ENCODE measurements at regions of chr20 and their contacts with region 1.

Region 1: DNA sequence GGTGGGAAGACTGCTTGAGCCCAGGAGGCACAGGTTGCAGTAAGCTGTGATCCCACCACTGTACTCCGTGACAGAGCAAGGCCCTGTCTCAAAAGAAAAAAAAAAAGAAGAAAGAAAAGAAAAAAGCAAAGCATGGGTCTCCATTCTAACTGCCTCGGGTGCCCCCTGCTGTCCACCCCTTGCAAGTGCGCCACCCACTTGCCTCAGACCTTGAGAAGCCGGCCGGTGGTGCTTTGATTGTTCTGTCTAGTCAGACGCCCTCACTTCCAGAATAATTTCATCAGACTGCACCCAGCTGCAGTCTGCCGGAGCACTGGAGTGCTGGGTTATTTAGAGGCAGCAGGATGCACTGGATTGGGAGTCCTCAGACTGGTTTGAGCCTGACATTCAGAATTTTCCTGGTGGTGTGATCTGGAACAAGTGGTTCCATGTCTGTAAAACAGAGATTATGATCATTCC is 17.6 kb upstream of the TM9SF4 start:
- DNase-seq: peak; percentile 18
- H3K4me3 ChIP-seq: no peak overlapping the region
- H3K27ac ChIP-seq: no peak overlapping the region
- H3K4me1 ChIP-seq: peaks cover 0 to 3% (median 0%) of the 10 kb centered on the region in 3 donors
- H3K27me3 ChIP-seq: peaks cover 0 to 6% (median 0%) of the 10 kb centered on the region in 4 donors
- CTCF ChIP-seq: peak; percentile 66 to 95 (median 82)
- POLR2A ChIP-seq: no peak

Region 2: DNA sequence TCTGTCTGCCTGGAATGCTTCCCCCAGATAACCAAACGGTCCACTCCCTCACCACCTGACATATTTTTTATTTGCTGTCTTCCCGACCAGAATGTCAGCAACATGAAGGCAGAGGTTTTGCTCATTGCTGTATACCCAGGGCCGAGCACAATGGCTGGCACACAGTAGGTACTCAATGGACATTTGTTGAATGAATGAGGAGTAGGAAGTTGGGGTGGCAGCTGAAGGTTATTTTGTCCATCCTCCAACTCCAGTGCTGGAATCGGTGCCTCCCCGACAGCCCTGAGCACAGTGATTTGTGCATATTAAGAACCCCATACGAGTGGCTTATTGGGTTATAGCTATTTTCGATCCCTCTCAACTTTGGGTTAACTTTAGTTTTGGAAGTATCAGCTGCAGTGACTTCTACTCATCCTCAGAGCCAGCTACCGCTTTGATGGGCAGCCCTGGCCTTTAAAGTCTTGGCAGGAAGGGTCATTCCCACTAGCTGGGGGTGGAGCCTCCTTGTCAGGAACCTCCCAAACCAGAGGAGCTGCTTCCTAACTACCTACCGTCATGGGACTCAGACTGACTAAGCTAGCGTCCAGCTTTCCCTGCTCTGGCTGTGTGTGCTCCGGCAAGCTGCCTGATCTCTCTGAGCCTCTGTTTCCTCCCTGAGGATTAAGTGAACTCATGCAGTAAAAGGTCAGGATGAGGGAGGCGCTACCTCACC is 231.8 kb before region 1 on chr20:
- intact Hi-C with region 1: loop called (anchors 10 kb)
- DNase-seq: no peak
- H3K4me3 ChIP-seq: peak overlapping the region; percentile 47 to 75 (median 58)
- H3K27ac ChIP-seq: peak overlapping the region in 2 of 4 donors; percentile 10 to 60
- H3K4me1 ChIP-seq: peaks cover 13 to 22% (median 16%) of the 10 kb centered on the region in 3 donors
- H3K27me3 ChIP-seq: peaks cover 0 to 66% (median 0%) of the 10 kb centered on the region in 4 donors
- CTCF ChIP-seq: no peak
- POLR2A ChIP-seq: no peak

Region 3: GRCh38 chr20:31943052-31943471 is 148.9 kb before region 1 on chr20:
- intact Hi-C with region 1: loop called (anchors 10 kb)
- DNase-seq: no peak
- H3K4me3 ChIP-seq: no peak overlapping the region
- H3K27ac ChIP-seq: no peak overlapping the region
- H3K4me1 ChIP-seq: peaks cover 0 to 16% (median 0%) of the 10 kb centered on the region in 3 donors
- H3K27me3 ChIP-seq: no peaks in the 10 kb centered on the region
- CTCF ChIP-seq: no peak
- POLR2A ChIP-seq: no peak

Region 4: DNA sequence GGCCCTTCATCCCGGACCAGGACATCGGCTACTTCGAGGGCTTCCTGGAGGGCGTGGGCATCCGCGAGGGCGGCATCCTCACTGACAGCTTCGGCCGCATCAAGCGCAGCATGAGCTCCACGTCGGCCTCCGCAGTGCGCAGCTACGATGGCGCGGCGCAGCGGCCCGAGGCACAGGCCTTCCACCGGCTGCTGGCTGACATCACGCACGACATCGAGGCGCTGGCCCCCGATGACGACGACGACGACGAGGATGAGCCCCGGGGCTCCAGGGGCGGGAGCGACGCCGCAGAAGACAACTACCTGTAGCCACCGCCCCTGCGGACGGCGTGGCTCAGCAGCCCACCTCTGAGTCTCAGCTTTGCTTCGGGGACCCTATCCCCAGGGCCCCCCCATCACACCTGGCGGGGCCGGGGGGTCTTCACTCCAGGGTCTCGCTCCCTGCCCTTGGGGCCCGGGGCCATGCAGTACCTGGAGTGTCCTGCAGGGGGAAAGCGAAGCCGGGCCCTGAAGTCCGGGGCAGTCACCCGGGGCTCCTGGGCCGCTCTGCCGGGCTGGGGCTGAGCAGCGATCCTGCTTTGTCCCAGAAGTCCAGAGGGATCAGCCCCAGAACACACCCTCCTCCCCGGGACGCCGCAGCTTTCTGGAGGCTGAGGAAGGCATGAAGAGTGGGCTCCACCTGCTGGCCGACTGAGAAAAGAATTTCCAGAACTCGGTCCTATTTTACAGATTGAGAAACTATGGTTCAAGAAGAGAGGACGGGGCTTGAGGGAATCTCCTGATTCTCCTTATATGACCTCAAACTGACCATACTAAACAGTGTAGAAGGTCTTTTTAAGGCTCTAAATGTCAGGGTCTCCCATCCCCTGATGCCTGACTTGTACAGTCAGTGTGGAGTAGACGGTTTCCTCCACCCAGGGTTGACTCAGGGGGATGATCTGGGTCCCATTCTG is 60.6 kb before region 1 on chr20:
- intact Hi-C with region 1: loop called (anchors 5 kb)
- DNase-seq: no peak
- H3K4me3 ChIP-seq: peak overlapping the region in 3 of 4 donors; percentile 18 to 54 (median 21)
- H3K27ac ChIP-seq: no peak overlapping the region
- H3K4me1 ChIP-seq: peaks cover 0 to 12% (median 9%) of the 10 kb centered on the region in 3 donors
- H3K27me3 ChIP-seq: peaks cover 0 to 60% (median 2%) of the 10 kb centered on the region in 4 donors
- CTCF ChIP-seq: peak; percentile 80 to 98 (median 92)
- POLR2A ChIP-seq: no peak